ENCODE measurements at regions of chr2 and their contacts with region 1.

Region 1: DNA sequence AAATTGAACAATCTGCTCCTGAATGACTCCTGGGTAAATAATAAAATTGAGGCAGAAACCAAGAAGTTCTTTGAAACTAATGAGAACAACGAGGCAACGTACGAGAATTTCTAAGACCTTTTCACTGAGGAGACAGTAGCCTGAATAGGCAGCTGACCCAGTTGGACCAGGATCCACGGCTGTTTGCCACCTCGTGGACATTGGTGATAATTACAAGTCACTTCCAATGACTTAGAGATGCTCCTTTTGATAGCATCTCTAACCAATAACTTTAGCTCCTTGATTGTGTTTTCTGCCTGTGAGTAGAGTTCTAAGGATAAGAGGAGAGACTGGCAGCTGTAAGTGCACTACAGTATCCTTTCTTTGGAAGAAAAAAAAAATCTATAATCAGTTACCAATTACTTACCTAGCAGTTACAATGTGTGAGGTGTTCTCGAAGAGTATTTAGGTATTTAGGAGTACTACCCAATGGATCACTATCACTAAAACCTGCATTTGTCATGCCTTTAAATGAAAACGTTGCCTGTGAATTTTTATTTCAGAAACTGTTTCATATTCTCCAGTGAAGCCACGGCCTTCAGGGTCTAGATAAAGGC is 31.3 kb upstream of the CNTNAP5 start:
- DNase-seq: no peak

Region 2: GRCh38 chr2:123495241-123495640 is 498.6 kb before region 1 on chr2:
- intact Hi-C with region 1: loop called in 1 of 2 experiments (anchors 5 kb)
- DNase-seq: no peak